K562 (cell line): ENCODE measurements at regions of chr9 and their contacts with region 1.

Region 1: GRCh38 chr9:131178382-131178781 is 53.0 kb downstream of the NUP214 start:
- DNase-seq: peak; percentile 100
- ATAC-seq: peak; percentile 96
- H3K4me3 ChIP-seq: no peak overlapping the region
- H3K27ac ChIP-seq: no peak overlapping the region
- H3K4me1 ChIP-seq: peaks cover 11 to 29% of the 10 kb centered on the region in 2 experiments; a peak in 4 of 5 replicates
- H3K27me3 ChIP-seq: no peaks in the 10 kb centered on the region
- CTCF ChIP-seq: no peak
- EP300 ChIP-seq: no peak
- POLR2A ChIP-seq: no peak
- RAD21 ChIP-seq: no peak

Region 2: GRCh38 chr9:130535818-130536561 is 642.4 kb before region 1 on chr9:
- CTCF ChIA-PET with region 1: no interaction called
- POLR2A ChIA-PET with region 1: no interaction called
- in situ Hi-C with region 1: no loop called
- intact Hi-C with region 1: no loop called
- DNase-seq: peak; percentile 53 to 90 (median 71)
- ATAC-seq: peak; percentile 83
- H3K4me3 ChIP-seq: peak overlapping the region; percentile 33
- H3K27ac ChIP-seq: peak overlapping the region; percentile 71
- H3K4me1 ChIP-seq: peaks cover 50 to 73% of the 10 kb centered on the region in 2 experiments
- H3K27me3 ChIP-seq: no peaks in the 10 kb centered on the region
- CTCF ChIP-seq: no peak; a peak in 1 of 6 replicates
- EP300 ChIP-seq: peak; percentile 73
- POLR2A ChIP-seq: peak; percentile 58
- RAD21 ChIP-seq: 0 out of 4 replicates have a peak, but pooled peaks of 1 of the 2 experiments have one; percentile 6

Region 3: GRCh38 chr9:131138676-131139075 is 39.7 kb before region 1 on chr9:
- CTCF ChIA-PET with region 1: no interaction called
- POLR2A ChIA-PET with region 1: interaction called, 38 read pairs
- in situ Hi-C with region 1: no loop called
- intact Hi-C with region 1: no loop called
- DNase-seq: peak in 3 of 4 experiments; percentile 63 to 80 (median 78)
- ATAC-seq: peak; percentile 7
- H3K4me3 ChIP-seq: no peak overlapping the region
- H3K27ac ChIP-seq: no peak overlapping the region
- H3K4me1 ChIP-seq: peaks cover 0 to 6% of the 10 kb centered on the region in 2 experiments; a peak in 2 of 5 replicates
- H3K27me3 ChIP-seq: no peaks in the 10 kb centered on the region
- CTCF ChIP-seq: no peak
- EP300 ChIP-seq: no peak
- POLR2A ChIP-seq: no peak
- RAD21 ChIP-seq: no peak

Region 4: GRCh38 chr9:131160416-131161112 is 17.8 kb before region 1 on chr9:
- CTCF ChIA-PET with region 1: interaction called, 3 read pairs
- POLR2A ChIA-PET with region 1: interaction called, 161 read pairs
- in situ Hi-C with region 1: no loop called
- intact Hi-C with region 1: no loop called
- DNase-seq: peak in 3 of 4 experiments; percentile 68 to 81 (median 78)
- ATAC-seq: peak; percentile 13
- H3K4me3 ChIP-seq: no peak overlapping the region
- H3K27ac ChIP-seq: no peak overlapping the region
- H3K4me1 ChIP-seq: no peaks in the 10 kb centered on the region
- H3K27me3 ChIP-seq: no peaks in the 10 kb centered on the region
- CTCF ChIP-seq: no peak
- EP300 ChIP-seq: no peak
- POLR2A ChIP-seq: no peak
- RAD21 ChIP-seq: no peak

Region 5: DNA sequence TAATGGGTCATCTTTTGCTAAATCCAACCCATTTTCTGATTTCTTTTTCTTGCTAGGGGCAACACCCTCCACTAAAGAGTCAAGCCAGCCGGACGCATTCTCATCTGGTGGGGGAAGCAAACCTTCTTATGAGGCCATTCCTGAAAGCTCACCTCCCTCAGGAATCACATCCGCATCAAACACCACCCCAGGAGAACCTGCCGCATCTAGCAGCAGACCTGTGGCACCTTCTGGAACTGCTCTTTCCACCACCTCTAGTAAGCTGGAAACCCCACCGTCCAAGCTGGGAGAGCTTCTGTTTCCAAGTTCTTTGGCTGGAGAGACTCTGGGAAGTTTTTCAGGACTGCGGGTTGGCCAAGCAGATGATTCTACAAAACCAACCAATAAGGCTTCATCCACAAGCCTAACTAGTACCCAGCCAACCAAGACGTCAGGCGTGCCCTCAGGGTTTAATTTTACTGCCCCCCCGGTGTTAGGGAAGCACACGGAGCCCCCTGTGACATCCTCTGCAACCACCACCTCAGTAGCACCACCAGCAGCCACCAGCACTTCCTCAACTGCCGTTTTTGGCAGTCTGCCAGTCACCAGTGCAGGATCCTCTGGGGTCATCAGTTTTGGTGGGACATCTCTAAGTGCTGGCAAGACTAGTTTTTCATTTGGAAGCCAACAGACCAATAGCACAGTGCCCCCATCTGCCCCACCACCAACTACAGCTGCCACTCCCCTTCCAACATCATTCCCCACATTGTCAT is 19.0 kb after region 1 on chr9:
- CTCF ChIA-PET with region 1: interaction called, 5 read pairs
- POLR2A ChIA-PET with region 1: interaction called, 264 read pairs
- in situ Hi-C with region 1: no loop called
- intact Hi-C with region 1: no loop called
- DNase-seq: peak in 3 of 4 experiments; percentile 58 to 73 (median 70)
- ATAC-seq: peak; percentile 21
- H3K4me3 ChIP-seq: no peak overlapping the region
- H3K27ac ChIP-seq: no peak overlapping the region
- H3K4me1 ChIP-seq: peaks cover 0 to 4% of the 10 kb centered on the region in 2 experiments; a peak in 1 of 5 replicates
- H3K27me3 ChIP-seq: no peaks in the 10 kb centered on the region
- CTCF ChIP-seq: no peak
- EP300 ChIP-seq: no peak
- POLR2A ChIP-seq: no peak
- RAD21 ChIP-seq: no peak

Region 6: GRCh38 chr9:131239307-131239975 is 61.1 kb after region 1 on chr9:
- CTCF ChIA-PET with region 1: no interaction called
- POLR2A ChIA-PET with region 1: no interaction called
- in situ Hi-C with region 1: no loop called
- intact Hi-C with region 1: no loop called
- DNase-seq: no peak
- ATAC-seq: peak; percentile 5
- H3K4me3 ChIP-seq: no peak overlapping the region
- H3K27ac ChIP-seq: no peak overlapping the region
- H3K4me1 ChIP-seq: peaks cover 3 to 31% of the 10 kb centered on the region in 2 experiments; a peak in 3 of 5 replicates
- H3K27me3 ChIP-seq: peaks cover 0 to 13% of the 10 kb centered on the region in 2 experiments; a peak in 2 of 5 replicates
- CTCF ChIP-seq: no peak
- EP300 ChIP-seq: no peak
- POLR2A ChIP-seq: no peak
- RAD21 ChIP-seq: no peak

Region 7: GRCh38 chr9:131270171-131271015 is 92.0 kb after region 1 on chr9:
- CTCF ChIA-PET with region 1: interaction called, 9 read pairs
- POLR2A ChIA-PET with region 1: interaction called, 10 read pairs
- in situ Hi-C with region 1: no loop called
- intact Hi-C with region 1: loop called (anchors 1 kb)
- DNase-seq: peak; percentile 92 to 94 (median 94)
- ATAC-seq: peak; percentile 10
- H3K4me3 ChIP-seq: no peak overlapping the region
- H3K27ac ChIP-seq: peak overlapping the region; percentile 75
- H3K4me1 ChIP-seq: peaks cover 47 to 91% of the 10 kb centered on the region in 2 experiments
- H3K27me3 ChIP-seq: no peaks in the 10 kb centered on the region; a peak in 1 of 5 replicates
- CTCF ChIP-seq: no peak
- EP300 ChIP-seq: no peak
- POLR2A ChIP-seq: no peak
- RAD21 ChIP-seq: no peak

Region 8: GRCh38 chr9:131334629-131335367 is 156.4 kb after region 1 on chr9:
- CTCF ChIA-PET with region 1: interaction called, 44 read pairs
- POLR2A ChIA-PET with region 1: interaction called, 13 read pairs
- in situ Hi-C with region 1: loop called (anchors 5 kb)
- intact Hi-C with region 1: loop called (anchors 1 kb)
- DNase-seq: peak in 3 of 4 experiments; percentile 24 to 26 (median 25)
- ATAC-seq: 0 out of 3 replicates have a peak, but pooled peaks have one; percentile 3
- H3K4me3 ChIP-seq: no peak overlapping the region
- H3K27ac ChIP-seq: no peak overlapping the region
- H3K4me1 ChIP-seq: peaks cover 21 to 45% of the 10 kb centered on the region in 2 experiments; a peak in 4 of 5 replicates
- H3K27me3 ChIP-seq: no peaks in the 10 kb centered on the region
- CTCF ChIP-seq: no peak
- EP300 ChIP-seq: no peak
- POLR2A ChIP-seq: no peak
- RAD21 ChIP-seq: no peak